Activated CD4-positive, alpha-beta memory T cell treated with anti-CD3 and anti-CD28 coated beads, Interleukin-2, amount 10 ng/mL, durations not matched to agents 7 days and 5 days (primary cell): ENCODE measurements at regions of chr1 and their contacts with region 1.

Region 1: GRCh38 chr1:219173758-219174588 is at the start of gene LYPLAL1:
- DNase-seq: peak; percentile 89
- H3K4me3 Mint-ChIP-seq: peak within 1 kb of the TSS; percentile 99
- H3K27ac Mint-ChIP-seq: peak within 1 kb of the TSS; percentile 93
- H3K4me1 Mint-ChIP-seq: peaks cover 43% of the 10 kb centered on the region
- H3K27me3 Mint-ChIP-seq: no peaks in the 10 kb centered on the region
- total RNA-seq, gene LYPLAL1: 19.0 to 19.7 TPM

Region 2: GRCh38 chr1:219189021-219189824 is 15.2 kb after region 1 on chr1:
- CTCF ChIA-PET with region 1: interaction called, 7 read pairs
- POLR2A ChIA-PET with region 1: interaction called, 20 read pairs
- DNase-seq: no peak
- H3K4me3 Mint-ChIP-seq: no peak overlapping the region
- H3K27ac Mint-ChIP-seq: no peak overlapping the region
- H3K4me1 Mint-ChIP-seq: peaks cover 20% of the 10 kb centered on the region
- H3K27me3 Mint-ChIP-seq: no peaks in the 10 kb centered on the region